Panc1 (cell line): ENCODE measurements at regions of chr5 and their contacts with region 1.

Region 1: DNA sequence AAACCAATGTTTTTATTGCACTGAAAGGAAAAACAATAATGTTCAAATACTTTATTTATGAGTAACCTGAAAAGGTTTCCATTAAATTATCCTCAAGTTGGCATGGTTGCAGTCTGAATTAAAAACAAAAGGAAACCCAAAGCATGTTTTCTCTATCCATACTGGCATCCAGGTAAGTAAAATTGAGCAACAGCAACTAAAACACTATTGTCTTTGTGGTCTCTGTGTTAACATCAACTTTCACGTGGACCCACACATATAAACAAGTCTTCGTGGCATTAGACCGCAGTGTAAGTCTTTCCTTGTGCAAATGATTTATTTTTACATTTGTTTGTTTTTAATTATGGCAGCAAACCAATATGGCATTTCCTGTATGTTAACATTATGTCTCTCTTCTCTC is 757.6 kb downstream of the SEMA5A start:
- DNase-seq: no peak
- ATAC-seq: no peak
- H3K4me3 ChIP-seq: no peak overlapping the region
- H3K27ac ChIP-seq: no peak overlapping the region
- H3K4me1 ChIP-seq: no peaks in the 10 kb centered on the region
- H3K27me3 ChIP-seq: no peaks in the 10 kb centered on the region
- CTCF ChIP-seq: no peak

Region 2: GRCh38 chr5:7664208-7664607 is 1124.0 kb before region 1 on chr5:
- CTCF ChIA-PET with region 1: no interaction called
- POLR2A ChIA-PET with region 1: interaction called, 11 read pairs
- in situ Hi-C with region 1: no loop called
- intact Hi-C with region 1: no loop called
- DNase-seq: no peak
- ATAC-seq: no peak
- H3K4me3 ChIP-seq: no peak overlapping the region
- H3K27ac ChIP-seq: no peak overlapping the region
- H3K4me1 ChIP-seq: no peaks in the 10 kb centered on the region
- H3K27me3 ChIP-seq: no peaks in the 10 kb centered on the region
- CTCF ChIP-seq: no peak

Region 3: GRCh38 chr5:8752595-8752994 is 35.7 kb before region 1 on chr5:
- CTCF ChIA-PET with region 1: no interaction called
- POLR2A ChIA-PET with region 1: no interaction called
- in situ Hi-C with region 1: no loop called
- intact Hi-C with region 1: no loop called
- DNase-seq: no peak
- ATAC-seq: no peak
- H3K4me3 ChIP-seq: no peak overlapping the region
- H3K27ac ChIP-seq: no peak overlapping the region
- H3K4me1 ChIP-seq: no peaks in the 10 kb centered on the region
- H3K27me3 ChIP-seq: no peaks in the 10 kb centered on the region
- CTCF ChIP-seq: no peak

Region 4: DNA sequence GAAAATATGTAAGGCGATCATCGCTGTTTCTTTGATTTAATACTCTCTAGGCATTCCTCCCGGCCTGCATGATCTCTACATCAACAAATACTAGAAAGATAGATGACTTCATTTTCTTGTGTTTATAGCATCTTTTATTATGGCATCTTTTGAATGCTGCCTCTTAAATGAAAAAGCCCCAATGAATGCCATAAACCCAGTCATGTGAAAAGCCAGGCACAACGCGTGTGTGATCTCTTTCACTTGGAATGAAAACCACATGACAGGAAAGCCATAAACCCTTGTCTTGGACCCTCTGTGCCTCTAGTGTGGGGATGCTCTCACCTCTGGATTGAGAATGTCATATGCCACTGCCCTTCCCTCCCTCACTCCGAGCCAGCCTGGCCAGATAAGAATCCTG is 281.4 kb after region 1 on chr5:
- CTCF ChIA-PET with region 1: no interaction called
- POLR2A ChIA-PET with region 1: no interaction called
- in situ Hi-C with region 1: no loop called
- intact Hi-C with region 1: no loop called
- DNase-seq: no peak
- ATAC-seq: no peak
- H3K4me3 ChIP-seq: no peak overlapping the region
- H3K27ac ChIP-seq: no peak overlapping the region
- H3K4me1 ChIP-seq: no peaks in the 10 kb centered on the region
- H3K27me3 ChIP-seq: no peaks in the 10 kb centered on the region
- CTCF ChIP-seq: no peak